Activated B cell treated with CpG ODN at 0.5 μM for 24 hours (primary cell): ENCODE measurements at regions of chr6 and their contacts with region 1.

Region 1: DNA sequence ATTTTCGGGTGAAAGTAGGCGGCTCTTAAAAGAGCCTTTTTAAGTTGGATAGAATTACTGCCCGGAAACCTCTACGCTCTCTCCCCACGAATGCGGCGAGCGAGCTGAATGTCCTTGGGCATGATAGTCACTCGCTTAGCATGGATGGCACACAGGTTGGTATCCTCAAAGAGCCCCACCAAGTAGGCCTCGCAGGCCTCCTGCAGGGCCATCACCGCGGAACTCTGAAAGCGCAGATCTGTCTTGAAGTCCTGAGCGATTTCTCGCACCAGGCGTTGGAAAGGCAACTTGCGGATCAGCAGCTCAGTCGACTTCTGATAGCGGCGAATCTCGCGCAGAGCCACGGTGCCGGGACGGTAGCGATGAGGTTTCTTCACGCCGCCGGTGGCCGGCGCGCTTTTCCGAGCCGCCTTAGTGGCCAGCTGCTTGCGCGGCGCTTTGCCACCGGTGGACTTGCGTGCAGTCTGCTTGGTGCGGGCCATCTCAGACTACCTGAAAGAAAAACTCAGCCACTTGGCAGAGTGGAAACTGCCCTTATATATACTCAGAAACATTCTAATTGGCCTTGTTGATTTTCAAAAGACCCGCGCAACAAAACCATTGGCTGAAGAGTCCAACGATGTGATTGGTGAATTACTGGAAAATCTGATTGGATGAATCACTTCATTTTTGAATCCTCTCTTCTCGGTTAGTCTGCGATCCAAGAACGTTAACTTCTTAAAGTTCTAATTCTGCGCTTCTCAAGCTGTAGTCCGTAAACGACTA is 93.9 kb upstream of the BTN3A2 start:
- DNase-seq: peak; percentile 49
- ATAC-seq: peak; percentile 18
- H3K4me3 Mint-ChIP-seq: no peak overlapping the region
- H3K27ac Mint-ChIP-seq: no peak overlapping the region
- H3K4me1 Mint-ChIP-seq: peaks cover 24% of the 10 kb centered on the region
- H3K27me3 Mint-ChIP-seq: no peaks in the 10 kb centered on the region
- CTCF ChIP-seq: no peak

Region 2: DNA sequence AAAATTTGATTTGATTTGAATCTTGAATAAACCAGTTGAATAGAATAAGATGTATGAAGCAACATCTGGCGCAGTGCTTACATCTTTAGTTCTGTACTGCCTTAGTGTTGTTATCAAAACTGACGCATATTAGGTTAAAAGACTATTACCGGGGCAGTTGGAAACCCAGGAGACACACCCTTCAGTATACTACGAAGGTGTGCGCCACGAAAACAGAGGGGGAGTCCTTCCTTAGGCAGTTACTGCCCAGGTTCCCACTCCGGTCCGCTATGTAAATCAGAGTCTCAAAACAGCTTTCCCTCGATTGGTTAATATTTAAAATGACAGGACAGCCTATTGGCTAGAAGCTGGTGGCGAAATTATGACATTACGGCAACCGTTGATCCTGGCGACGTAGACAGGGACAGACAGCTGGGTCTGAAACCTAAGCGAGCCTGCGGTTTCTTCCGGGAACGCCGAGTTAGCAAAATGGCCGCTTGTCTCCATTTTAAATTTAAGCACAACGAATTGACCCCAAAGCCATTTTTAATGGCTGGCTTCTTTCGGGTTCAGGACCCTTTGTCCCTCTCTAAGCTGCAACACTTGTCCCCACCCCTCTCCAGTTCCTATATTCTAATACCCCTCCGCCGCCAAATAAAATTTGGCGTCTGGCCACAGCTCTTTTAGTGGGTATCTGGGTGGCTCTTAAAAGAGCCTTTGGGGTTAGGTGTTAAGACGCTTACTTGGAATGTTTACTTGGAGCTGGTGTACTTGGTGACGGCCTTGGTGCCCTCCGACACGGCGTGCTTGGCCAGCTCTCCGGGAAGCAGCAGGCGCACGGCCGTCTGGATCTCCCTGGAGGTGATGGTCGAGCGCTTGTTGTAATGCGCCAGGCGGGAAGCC is 148.1 kb before region 1 on chr6:
- CTCF ChIA-PET with region 1: no interaction called
- POLR2A ChIA-PET with region 1: interaction called, 108 read pairs
- intact Hi-C with region 1: loop called (anchors 1 kb)
- DNase-seq: peak; percentile 68
- ATAC-seq: peak; percentile 60
- H3K4me3 Mint-ChIP-seq: peak overlapping the region; percentile 94
- H3K27ac Mint-ChIP-seq: peak overlapping the region; percentile 99
- H3K4me1 Mint-ChIP-seq: peaks cover 34% of the 10 kb centered on the region
- H3K27me3 Mint-ChIP-seq: no peaks in the 10 kb centered on the region
- CTCF ChIP-seq: no peak

Region 3: DNA sequence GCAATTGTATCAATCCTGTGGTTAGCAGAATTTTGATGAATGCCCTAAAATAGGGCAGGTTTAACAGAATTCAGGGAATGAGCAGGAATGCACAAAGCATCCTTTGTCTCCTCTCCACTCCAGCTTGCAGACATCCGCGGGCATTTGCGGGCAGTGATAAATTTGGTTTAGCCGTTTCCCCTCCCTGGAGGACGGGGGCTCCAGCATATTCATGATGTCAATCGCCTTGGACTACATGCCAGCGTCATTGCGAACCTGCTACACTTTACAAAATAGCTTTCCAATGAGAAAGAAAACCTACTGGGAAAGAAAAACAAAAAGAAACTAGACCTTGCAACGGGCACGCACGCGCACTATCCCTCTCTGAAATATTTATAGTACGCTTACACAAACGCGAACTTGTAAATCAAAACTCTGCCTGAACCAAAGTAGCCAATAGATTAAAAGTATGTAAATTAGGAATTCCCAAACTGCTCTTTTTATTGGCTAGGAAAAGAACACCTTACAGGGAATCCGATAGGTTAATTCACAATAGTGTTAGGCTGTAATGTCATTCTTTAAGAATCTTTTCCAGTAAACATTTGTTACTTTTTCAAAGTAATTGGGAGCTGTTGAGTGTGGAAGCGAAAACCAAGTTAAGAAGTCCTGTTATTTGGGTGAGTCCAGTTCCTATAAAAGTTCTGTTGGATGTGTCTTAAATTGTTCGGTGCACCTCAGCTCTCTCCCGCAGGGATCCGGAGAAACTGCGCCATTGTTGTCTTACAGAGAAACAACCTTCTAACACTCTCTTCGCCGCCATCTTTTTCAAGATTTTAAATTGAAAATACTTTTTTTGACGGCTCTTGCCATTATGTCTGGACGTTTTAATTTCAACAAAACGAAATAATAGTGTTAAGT is 47.2 kb before region 1 on chr6:
- CTCF ChIA-PET with region 1: interaction called, 3 read pairs
- POLR2A ChIA-PET with region 1: interaction called, 24 read pairs
- intact Hi-C with region 1: loop called (anchors 2 kb)
- DNase-seq: no peak
- ATAC-seq: peak; percentile 87
- H3K4me3 Mint-ChIP-seq: no peak overlapping the region
- H3K27ac Mint-ChIP-seq: no peak overlapping the region
- H3K4me1 Mint-ChIP-seq: peaks cover 4% of the 10 kb centered on the region
- H3K27me3 Mint-ChIP-seq: no peaks in the 10 kb centered on the region
- CTCF ChIP-seq: no peak

Region 4: GRCh38 chr6:26312501-26313390 is 41.7 kb after region 1 on chr6:
- CTCF ChIA-PET with region 1: no interaction called
- POLR2A ChIA-PET with region 1: interaction called, 11 read pairs
- intact Hi-C with region 1: loop called (anchors 1 kb)
- DNase-seq: peak; percentile 63
- ATAC-seq: peak; percentile 79
- H3K4me3 Mint-ChIP-seq: peak overlapping the region; percentile 90
- H3K27ac Mint-ChIP-seq: peak overlapping the region; percentile 95
- H3K4me1 Mint-ChIP-seq: peaks cover 28% of the 10 kb centered on the region
- H3K27me3 Mint-ChIP-seq: peaks cover 5% of the 10 kb centered on the region
- CTCF ChIP-seq: no peak

Region 5: GRCh38 chr6:26553635-26554446 is 282.8 kb after region 1 on chr6:
- CTCF ChIA-PET with region 1: no interaction called
- POLR2A ChIA-PET with region 1: interaction called, 9 read pairs
- intact Hi-C with region 1: loop called (anchors 1 kb)
- DNase-seq: peak; percentile 67
- ATAC-seq: peak; percentile 46
- H3K4me3 Mint-ChIP-seq: no peak overlapping the region
- H3K27ac Mint-ChIP-seq: no peak overlapping the region
- H3K4me1 Mint-ChIP-seq: peaks cover 28% of the 10 kb centered on the region
- H3K27me3 Mint-ChIP-seq: no peaks in the 10 kb centered on the region
- CTCF ChIP-seq: no peak

Region 6: GRCh38 chr6:27864906-27865849 is 1594.1 kb after region 1 on chr6:
- CTCF ChIA-PET with region 1: no interaction called
- POLR2A ChIA-PET with region 1: interaction called, 10 read pairs
- intact Hi-C with region 1: no loop called
- DNase-seq: peak; percentile 68
- ATAC-seq: peak; percentile 85
- H3K4me3 Mint-ChIP-seq: peak overlapping the region; percentile 98
- H3K27ac Mint-ChIP-seq: peak overlapping the region; percentile 99
- H3K4me1 Mint-ChIP-seq: peaks cover 48% of the 10 kb centered on the region
- H3K27me3 Mint-ChIP-seq: no peaks in the 10 kb centered on the region
- CTCF ChIP-seq: no peak